ENCODE measurements at regions of chr4 and their contacts with region 1.

Region 1: DNA sequence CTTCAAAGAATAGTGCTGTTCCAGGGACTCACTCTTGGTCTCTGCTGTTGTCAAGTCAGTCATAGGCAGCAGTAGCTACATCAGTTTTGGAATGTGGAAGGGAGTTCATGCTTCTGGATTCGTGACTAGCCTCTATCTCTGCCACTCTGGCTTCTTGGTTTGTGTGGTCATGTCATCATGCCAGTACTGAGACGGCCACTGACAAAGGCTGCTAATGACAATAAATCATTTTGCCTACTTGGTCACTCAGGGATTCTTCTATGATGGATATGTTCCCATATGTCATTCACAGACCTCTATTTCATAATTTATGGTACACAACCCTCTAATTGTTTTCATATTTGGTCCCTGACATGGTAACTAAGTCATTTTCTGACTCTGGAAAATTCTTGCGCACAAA is 450.8 kb upstream of the BOD1L1 start:
- DNase-seq: no peak
- H3K4me3 ChIP-seq: no peak overlapping the region
- H3K27ac ChIP-seq: no peak overlapping the region
- H3K4me1 ChIP-seq: no peaks in the 10 kb centered on the region
- H3K27me3 ChIP-seq: no peaks in the 10 kb centered on the region
- CTCF ChIP-seq: no peak
- POLR2A ChIP-seq: no peak

Region 2: GRCh38 chr4:15809466-15809865 is 1731.1 kb after region 1 on chr4:
- intact Hi-C with region 1: no loop called
- DNase-seq: no peak
- H3K4me3 ChIP-seq: no peak overlapping the region
- H3K27ac ChIP-seq: no peak overlapping the region
- H3K4me1 ChIP-seq: no peaks in the 10 kb centered on the region
- H3K27me3 ChIP-seq: no peaks in the 10 kb centered on the region
- CTCF ChIP-seq: no peak
- POLR2A ChIP-seq: no peak

Region 3: DNA sequence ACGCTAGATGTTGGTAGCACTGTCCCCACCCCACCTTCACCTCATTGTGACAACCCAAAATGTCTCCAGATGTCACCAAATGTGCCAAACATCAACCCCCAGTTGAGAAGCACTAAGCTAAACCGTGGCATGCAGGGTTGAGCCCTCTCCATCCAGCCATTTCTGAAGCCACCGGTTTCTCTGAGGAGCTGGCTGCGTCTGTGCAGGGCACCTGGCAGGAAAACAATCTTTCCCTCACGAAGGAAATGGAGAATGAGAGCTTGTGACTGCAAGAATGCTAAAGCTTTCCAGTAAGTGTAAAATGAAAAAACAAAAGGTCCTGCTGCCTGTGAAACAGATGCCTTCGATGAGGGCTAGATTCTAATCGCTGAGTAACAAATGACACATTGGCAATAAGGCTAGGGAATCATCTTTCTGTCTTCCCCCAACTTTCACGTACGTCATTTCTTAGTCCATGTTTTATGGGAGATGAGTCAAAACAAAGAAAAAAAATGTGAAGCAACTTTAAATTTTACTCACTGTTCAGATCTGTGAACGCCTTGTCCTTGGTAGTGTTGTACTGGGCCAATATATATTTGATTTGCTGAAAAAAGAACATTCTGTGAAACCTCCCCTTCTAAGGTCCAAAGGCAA is 1945.6 kb after region 1 on chr4:
- intact Hi-C with region 1: loop called (anchors 5 kb)
- DNase-seq: no peak
- H3K4me3 ChIP-seq: no peak overlapping the region
- H3K27ac ChIP-seq: no peak overlapping the region
- H3K4me1 ChIP-seq: no peaks in the 10 kb centered on the region
- H3K27me3 ChIP-seq: no peaks in the 10 kb centered on the region
- CTCF ChIP-seq: no peak
- POLR2A ChIP-seq: no peak

Measured in breast epithelium (tissue), 4 donors.